ENCODE measurements at regions of chr7 and their contacts with region 1.

Region 1: DNA sequence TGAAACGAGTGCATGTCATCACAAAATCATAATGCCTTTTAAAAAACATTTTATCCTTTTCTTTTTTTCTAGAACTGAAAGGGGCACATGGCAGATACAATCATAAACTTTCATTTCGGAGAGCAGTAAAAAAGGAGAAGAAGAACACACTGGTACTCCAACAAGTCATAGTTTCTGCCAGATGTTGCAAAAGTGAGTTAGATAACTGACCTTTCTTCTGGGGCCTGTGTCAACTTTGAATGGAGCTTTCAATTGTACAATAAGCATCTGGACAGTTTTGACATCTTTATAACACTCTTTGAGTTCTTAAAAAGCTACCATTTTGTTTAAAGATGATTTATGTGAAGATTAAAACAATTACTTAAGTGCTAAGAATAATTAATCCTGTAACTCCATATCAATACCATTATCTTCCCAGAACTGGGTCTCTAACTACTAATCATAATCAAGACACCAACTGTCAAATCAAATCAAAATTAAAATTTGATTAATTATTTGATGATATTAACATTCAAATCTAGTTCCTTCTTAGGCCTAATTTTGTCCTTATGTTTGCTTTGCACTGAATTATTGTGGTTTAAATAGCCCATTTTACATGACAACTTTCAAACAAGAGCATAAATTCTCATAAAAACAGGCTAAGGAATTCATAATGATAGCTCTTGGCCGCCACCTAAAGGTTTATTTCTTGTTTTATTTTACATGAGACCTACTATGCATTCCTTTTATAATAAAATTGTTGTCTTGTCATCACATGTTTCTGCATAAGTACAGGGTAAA is 19.5 kb upstream of the ITGB8 start:
- DNase-seq: peak; percentile 46
- H3K4me3 ChIP-seq: no peak overlapping the region
- H3K27ac ChIP-seq: no peak overlapping the region
- H3K4me1 ChIP-seq: no peaks in the 10 kb centered on the region
- CTCF ChIP-seq: peak; percentile 79

Region 2: DNA sequence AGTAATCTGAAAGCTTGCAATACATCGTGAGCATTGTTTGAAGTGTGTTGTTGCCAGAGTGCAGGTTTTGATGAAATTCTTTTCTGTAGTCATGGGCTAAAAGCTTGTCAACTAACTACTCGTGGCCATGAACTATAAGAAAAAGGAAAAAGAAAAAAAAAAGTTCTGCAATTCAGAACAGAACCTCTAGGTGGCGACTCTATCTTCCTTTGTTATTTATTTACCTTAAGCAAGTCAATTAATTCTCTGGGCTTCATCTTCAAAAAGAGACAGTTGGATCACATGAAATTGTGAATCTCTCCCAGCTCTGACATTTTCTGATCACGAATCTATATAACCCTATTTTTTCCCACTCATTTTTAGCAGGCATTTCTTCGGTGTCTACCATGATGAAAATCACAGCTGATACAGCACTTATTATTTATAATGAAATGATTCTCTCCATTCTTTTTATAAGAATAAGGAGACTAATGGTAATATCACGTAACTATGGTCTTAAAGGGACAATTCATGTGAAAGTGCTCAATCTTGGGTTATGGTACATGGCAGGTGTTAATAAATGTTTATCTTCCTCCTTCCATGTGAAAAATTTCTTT is 556.5 kb before region 1 on chr7:
- CTCF ChIA-PET with region 1: no interaction called
- POLR2A ChIA-PET with region 1: interaction called, 3 read pairs
- intact Hi-C with region 1: loop called (anchors 2 kb)
- DNase-seq: peak; percentile 29
- H3K4me3 ChIP-seq: no peak overlapping the region
- H3K27ac ChIP-seq: no peak overlapping the region
- H3K4me1 ChIP-seq: peaks cover under 1% of the 10 kb centered on the region
- CTCF ChIP-seq: peak; percentile 94

Region 3: DNA sequence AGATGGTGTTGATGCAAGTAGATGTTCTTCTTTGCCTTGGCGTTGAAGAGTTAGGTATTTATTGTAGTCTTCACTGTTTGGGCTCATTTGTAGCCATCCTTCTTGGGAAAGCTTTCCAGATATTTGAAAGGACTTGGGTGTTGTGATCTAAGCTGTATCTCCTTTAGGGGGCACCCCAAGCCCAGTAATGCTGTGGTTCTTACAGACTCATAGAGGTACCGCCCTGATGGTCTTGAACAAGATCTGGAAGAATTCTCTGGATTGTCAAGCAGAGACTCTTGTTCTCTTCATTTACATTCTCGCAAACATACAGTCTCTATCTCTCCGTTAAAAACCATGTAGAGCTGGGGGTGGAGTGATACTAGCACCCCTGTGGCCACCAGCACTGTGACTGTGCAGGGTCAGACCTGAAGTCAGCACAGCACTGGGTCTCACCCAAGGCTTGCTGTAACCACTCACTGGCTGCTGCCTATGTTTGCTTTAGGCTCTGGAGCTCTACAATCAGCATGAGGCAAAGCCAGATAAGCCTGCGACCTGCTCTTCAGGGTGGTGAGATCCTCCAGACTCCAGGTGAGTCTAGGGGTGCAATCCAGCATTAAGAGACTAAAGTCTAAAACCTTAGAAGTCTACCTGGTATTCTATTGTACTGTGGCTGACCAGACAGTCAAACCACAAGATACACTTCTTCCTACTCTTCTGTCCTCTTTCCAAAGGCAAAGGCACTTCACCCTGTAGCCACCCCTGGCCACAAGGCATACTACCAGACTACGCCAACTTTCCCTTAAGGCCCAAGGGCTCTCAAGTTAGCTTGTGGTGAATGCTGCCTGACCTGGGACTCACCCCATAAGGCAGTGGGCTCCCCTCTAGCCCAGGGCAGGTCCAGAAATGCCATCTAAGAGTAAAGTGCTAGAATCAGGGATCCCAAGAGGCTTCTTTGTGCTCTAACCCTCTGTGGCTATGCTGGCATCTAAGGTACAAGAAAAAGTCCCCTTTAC is 328.0 kb before region 1 on chr7:
- CTCF ChIA-PET with region 1: interaction called, 8 read pairs
- POLR2A ChIA-PET with region 1: no interaction called
- intact Hi-C with region 1: loop called (anchors 5 kb)
- DNase-seq: peak; percentile 41
- H3K4me3 ChIP-seq: no peak overlapping the region
- H3K27ac ChIP-seq: no peak overlapping the region
- H3K4me1 ChIP-seq: no peaks in the 10 kb centered on the region
- CTCF ChIP-seq: peak; percentile 75

Region 4: GRCh38 chr7:20172736-20173334 is 138.3 kb before region 1 on chr7:
- CTCF ChIA-PET with region 1: no interaction called
- POLR2A ChIA-PET with region 1: interaction called, 3 read pairs
- intact Hi-C with region 1: loop called (anchors 5 kb)
- DNase-seq: peak; percentile 54
- H3K4me3 ChIP-seq: no peak overlapping the region
- H3K27ac ChIP-seq: no peak overlapping the region
- H3K4me1 ChIP-seq: no peaks in the 10 kb centered on the region
- CTCF ChIP-seq: peak; percentile 84

Region 5: GRCh38 chr7:20343205-20343604 is 32.1 kb after region 1 on chr7:
- CTCF ChIA-PET with region 1: no interaction called
- POLR2A ChIA-PET with region 1: no interaction called
- intact Hi-C with region 1: no loop called
- DNase-seq: no peak
- H3K4me3 ChIP-seq: no peak overlapping the region
- H3K27ac ChIP-seq: no peak overlapping the region
- H3K4me1 ChIP-seq: no peaks in the 10 kb centered on the region
- CTCF ChIP-seq: no peak

Measured in OCI-LY7 (cell line).